OCI-LY7 (cell line): ENCODE measurements at regions of chr16 and their contacts with region 1.

Region 1: DNA sequence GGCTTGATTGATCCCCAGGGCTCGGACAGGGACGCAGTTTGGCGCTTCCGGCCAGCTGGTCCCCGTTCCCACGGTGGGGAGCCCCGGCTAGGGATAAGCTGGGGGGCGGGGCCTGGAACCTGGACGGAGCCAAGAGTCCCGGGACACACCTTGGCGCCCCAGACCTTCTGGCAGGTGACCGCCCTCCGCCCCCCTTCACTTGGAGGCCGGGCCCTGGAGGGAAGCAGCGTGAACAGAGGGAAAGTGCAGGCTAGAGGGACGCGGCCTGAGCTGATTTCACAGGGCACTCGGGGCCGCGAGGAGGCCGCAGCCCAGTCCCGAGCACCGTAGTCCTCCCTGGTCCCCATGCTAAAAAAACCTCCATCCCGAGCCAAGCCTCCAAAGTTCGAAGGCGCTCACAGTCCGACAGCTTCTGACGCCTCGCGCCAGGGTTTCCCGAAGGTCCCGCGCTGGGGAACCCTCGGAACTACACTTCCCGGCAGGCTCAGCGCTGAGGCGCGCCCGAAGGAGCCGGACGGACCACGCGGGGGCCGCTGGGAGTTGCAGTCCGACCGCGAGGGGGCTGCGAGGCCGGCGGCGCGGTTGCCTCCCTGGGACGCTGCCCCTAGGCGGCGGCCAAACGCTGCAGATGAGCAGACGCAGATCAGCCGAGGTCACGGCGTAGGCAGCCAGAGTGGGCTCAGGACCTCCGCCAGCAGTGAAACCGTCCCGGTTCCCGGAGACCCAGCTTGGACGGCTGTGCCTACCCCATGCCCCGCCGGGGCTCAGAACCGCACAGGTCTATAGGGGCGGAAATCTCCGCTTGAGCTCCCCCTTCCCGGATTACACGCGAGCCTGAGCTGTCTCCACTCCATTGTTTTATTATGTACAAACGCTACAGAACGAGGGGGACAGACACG is at the start of gene TBX6:
- DNase-seq: peak; percentile 96
- H3K4me3 ChIP-seq: peak within 1 kb of the TSS; percentile 71
- H3K27ac ChIP-seq: peak within 1 kb of the TSS; percentile 79
- H3K4me1 ChIP-seq: peaks cover 35% of the 10 kb centered on the region
- CTCF ChIP-seq: peak; percentile 61; the same call in 1 of the 2 replicates
- total RNA-seq, gene TBX6: 0.77 and 1.4 TPM in 2 replicates

Region 2: DNA sequence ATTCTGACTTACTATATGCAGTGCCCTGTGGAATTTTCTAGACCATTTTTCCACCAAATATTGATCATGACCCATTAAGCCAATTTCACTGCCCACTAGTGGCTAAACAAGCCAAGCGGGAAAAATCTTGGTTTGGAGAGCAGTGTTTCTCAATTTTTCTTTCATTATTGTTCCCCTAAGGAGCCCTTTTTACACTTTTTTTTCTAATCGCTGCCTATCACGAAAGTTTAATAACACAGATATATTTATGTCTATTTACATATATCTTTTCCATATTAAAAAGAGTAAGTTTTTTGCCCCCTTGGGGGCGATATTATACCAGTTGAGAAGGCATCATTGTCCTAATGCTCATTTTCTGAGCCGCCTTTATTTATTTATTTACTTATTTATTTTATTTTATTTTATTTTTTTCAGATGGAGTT is 49.9 kb before region 1 on chr16:
- CTCF ChIA-PET with region 1: no interaction called
- POLR2A ChIA-PET with region 1: interaction called, 3 read pairs
- intact Hi-C with region 1: loop called (anchors 2 kb)
- DNase-seq: peak; percentile 39
- H3K4me3 ChIP-seq: no peak overlapping the region
- H3K27ac ChIP-seq: no peak overlapping the region
- H3K4me1 ChIP-seq: no peaks in the 10 kb centered on the region
- CTCF ChIP-seq: peak; percentile 76

Region 3: GRCh38 chr16:30065143-30065850 is 26.4 kb before region 1 on chr16 and contains the start of gene ALDOA:
- CTCF ChIA-PET with region 1: interaction called, 4 read pairs
- POLR2A ChIA-PET with region 1: interaction called, 5 read pairs
- intact Hi-C with region 1: loop called (anchors 1 kb)
- DNase-seq: peak; percentile 98
- H3K4me3 ChIP-seq: peak within 1 kb of the TSS; percentile 99
- H3K27ac ChIP-seq: peak within 1 kb of the TSS; percentile 86
- H3K4me1 ChIP-seq: peaks cover 39% of the 10 kb centered on the region
- CTCF ChIP-seq: no peak
- total RNA-seq, gene ALDOA: 646 and 809 TPM in 2 replicates

Region 4: DNA sequence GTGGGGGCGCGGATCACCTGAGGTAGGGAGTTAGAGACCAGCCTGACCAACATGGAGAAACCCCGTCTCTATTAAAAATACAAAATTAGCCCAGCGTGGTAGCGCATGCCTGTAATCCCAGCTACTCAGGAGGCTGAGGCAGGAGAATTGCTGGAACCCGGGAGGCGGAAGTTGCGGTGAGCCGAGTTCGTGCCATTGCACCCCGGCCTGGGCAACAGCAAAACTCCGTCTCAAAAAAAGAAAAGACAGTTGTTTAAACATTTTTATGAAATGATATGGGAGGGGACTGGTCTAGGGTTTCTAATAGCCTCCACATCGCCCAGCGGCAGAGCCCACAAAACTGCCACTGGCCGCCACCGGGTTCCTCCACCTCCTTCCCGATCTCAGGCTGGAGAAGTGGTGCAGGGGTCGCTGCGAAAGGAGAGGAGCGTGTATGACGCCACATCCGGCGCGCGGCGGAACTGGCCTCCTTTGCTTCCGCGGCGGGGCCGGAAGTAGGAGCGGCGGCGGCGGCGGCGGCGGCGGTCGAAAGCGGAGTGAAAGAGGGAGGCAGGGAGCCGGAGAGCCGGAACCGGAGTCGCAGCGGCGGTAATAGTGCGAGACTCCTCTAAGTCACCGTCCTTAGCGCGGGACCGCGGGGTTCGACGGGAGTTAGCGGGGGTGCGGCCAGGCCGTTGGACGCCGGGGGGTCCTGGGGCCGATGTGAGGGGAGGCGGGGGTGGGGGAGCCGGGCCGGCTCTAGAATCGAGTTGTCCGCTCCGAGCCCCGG is 16.0 kb before region 1 on chr16 and contains the start of gene PPP4C:
- CTCF ChIA-PET with region 1: interaction called, 4 read pairs
- POLR2A ChIA-PET with region 1: interaction called, 5 read pairs
- intact Hi-C with region 1: loop called (anchors 1 kb)
- DNase-seq: peak; percentile 90
- H3K4me3 ChIP-seq: peak within 1 kb of the TSS; percentile 98
- H3K27ac ChIP-seq: peak within 1 kb of the TSS; percentile 51
- H3K4me1 ChIP-seq: peaks cover 26% of the 10 kb centered on the region
- CTCF ChIP-seq: no peak
- total RNA-seq, gene PPP4C: 137 and 144 TPM in 2 replicates

Region 5: DNA sequence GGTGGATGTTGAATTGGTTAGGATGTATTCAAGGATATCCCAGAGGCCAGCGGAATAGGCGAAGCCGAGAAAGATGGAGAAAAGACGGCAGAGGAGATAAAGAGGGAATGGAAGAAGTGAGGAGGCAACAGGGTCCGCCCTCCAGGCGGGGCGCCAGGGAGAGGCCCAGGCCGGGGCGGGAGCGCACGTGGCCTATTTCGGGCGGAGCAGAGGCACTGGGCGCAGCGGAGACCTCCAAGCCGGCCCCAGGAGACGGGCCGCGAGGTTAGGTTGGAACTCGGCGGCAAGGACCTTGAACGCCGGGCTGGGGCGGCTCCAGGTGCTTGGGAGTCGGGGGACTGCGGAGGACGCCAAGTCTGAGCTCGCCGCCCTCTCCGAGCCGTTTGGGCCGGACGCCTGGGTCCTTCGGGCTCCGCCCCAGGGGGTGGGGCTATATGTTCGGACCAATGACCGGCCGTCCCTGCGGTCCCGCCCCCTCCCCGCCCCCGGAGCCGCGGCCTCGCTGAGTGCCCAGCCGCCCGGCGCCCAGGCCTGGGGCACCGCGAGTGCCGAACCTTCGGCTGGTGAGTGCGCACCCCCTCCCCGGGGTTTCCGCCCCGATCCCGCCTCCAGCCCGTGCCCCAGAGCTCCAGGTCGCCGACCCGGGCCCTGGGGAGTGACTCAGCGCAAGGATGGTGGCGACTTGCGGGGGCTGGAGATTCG is 315.5 kb after region 1 on chr16 and contains the start of gene ZNF771:
- CTCF ChIA-PET with region 1: no interaction called
- POLR2A ChIA-PET with region 1: interaction called, 3 read pairs
- intact Hi-C with region 1: loop called (anchors 10 kb)
- DNase-seq: peak; percentile 93
- H3K4me3 ChIP-seq: peak within 1 kb of the TSS; percentile 84
- H3K27ac ChIP-seq: peak within 1 kb of the TSS; percentile 82
- H3K4me1 ChIP-seq: peaks cover 28% of the 10 kb centered on the region
- CTCF ChIP-seq: peak; percentile 49
- total RNA-seq, gene ZNF771: 6.4 and 11.3 TPM in 2 replicates